ENCODE measurements at regions of chr5 and their contacts with region 1.

Region 1: DNA sequence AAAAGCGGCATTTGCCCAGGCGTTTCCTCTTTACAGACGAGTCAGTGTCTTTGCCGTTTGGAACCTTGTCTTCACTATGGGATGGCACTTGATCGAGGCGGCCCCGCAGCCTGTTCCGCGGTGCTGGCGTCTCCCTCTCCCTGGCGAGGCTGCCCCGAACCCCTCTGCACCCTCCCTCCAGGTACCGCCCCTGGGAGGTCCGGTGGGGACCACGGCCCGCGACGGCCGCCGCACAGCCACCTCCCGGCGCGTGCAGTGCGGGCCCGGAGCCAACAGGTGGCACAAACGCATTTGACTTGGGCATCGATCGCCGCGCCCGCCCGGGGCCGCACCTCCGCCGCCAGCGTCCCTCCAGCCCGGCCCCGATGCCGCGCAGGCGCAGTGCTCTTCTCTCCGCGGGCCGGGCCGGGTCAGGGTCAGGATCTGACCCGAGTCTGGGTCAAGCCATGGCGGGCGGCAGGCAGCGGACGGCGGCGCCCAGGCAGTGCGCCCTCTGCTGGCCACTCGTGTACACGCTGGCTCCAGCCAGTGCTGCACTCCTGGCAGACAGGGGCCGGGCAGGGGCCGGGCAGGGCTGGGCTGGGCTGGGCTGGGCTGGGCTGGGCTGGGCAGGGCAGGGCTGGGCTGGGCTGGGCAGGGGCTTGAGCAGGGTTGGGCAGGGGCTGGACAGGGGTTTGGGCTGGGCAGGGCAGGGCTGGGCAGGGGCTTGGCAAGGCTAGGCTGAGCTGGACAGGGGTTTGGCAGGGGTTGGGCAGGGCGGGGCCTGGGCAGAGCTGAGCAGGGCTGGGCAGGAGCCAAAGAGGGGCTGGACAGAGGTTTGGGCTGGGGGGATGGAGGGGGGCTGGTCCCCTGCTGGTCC is 155.8 kb upstream of the IRX4 start:
- DNase-seq: peak; percentile 63 to 86 (median 73)
- H3K4me3 ChIP-seq: peak overlapping the region; percentile 19
- H3K27ac ChIP-seq: no peak overlapping the region
- H3K4me1 ChIP-seq: peaks cover 4% of the 10 kb centered on the region
- H3K27me3 ChIP-seq: no peaks in the 10 kb centered on the region
- CTCF ChIP-seq: peak; percentile 58 to 61 (median 60)
- EP300 ChIP-seq: no peak
- POLR2A ChIP-seq: no peak

Region 2: DNA sequence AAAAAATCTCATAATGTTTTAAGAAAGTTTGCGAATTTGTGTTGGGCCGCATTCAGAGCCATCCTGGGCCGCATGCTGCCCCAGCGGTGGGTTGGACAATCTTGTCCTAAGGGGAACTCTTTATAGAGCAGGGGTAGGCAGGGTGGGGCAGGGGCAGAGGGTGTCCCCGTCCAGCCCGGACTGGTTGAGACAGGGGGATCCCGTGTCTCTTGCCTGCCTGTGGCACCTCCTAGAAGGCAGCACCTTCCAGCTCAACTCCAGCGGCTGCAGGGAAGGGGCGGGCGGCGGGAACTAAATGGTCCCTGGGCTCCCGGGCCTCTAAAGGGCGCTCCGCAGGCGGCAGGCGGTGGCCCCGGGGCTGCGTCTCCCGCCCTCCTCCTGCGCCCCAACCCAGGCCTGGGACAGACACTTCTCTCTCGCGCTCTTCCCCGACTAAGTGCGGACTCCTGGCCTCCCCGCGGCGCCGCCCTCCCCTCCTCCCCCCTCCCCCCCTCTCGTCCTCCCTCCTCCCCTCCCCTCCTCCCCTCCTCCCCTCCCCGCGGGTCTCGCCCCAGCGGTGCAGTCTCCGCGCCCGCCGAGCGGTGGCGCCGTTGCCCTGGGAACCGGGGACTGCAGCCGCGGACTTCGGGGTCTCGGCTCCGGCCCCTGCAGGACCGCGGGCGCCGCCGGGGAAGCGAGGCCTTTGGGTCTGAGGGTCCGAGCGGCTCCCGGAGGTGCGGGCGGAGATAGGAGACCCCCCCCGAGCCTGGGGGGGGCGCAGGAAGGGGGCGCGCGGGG is 371.6 kb before region 1 on chr5:
- intact Hi-C with region 1: loop called in 2 of 4 experiments (anchors 5 to 10 kb)
- DNase-seq: peak; percentile 44 to 83 (median 71)
- H3K4me3 ChIP-seq: no peak overlapping the region
- H3K27ac ChIP-seq: peak overlapping the region in 1 of 2 donors; percentile 36
- H3K4me1 ChIP-seq: peaks cover 7% of the 10 kb centered on the region
- H3K27me3 ChIP-seq: no peaks in the 10 kb centered on the region
- CTCF ChIP-seq: peak in 1 of 3 donors; percentile 42
- EP300 ChIP-seq: no peak
- POLR2A ChIP-seq: no peak

Region 3: DNA sequence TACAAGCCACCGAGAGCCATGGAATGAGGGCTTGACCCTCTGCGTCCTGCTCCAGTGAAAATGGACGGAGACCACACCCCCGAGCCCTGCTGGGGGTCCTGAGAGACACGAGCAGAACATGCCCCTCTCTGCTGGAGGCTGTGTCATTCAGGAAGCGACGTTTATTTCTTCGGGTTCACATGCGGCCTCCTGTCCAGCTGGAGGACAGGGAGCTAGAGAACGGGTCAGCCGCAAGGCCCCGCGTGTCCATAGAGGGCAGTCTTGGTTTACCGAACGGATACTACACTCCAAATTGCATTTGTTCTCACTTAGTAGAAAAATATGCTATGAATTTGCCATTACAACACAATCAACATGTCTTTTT is 275.0 kb before region 1 on chr5:
- intact Hi-C with region 1: loop called in 3 of 4 experiments (anchors 10 kb)
- DNase-seq: peak; percentile 30 to 67 (median 42)
- H3K4me3 ChIP-seq: no peak overlapping the region
- H3K27ac ChIP-seq: no peak overlapping the region
- H3K4me1 ChIP-seq: peaks cover 2% of the 10 kb centered on the region
- H3K27me3 ChIP-seq: no peaks in the 10 kb centered on the region
- CTCF ChIP-seq: peak in 1 of 3 donors; percentile 24
- EP300 ChIP-seq: no peak
- POLR2A ChIP-seq: no peak

Measured in ovary (tissue), 10 donors.